ENCODE measurements at regions of chr5 and their contacts with region 1.

Region 1: DNA sequence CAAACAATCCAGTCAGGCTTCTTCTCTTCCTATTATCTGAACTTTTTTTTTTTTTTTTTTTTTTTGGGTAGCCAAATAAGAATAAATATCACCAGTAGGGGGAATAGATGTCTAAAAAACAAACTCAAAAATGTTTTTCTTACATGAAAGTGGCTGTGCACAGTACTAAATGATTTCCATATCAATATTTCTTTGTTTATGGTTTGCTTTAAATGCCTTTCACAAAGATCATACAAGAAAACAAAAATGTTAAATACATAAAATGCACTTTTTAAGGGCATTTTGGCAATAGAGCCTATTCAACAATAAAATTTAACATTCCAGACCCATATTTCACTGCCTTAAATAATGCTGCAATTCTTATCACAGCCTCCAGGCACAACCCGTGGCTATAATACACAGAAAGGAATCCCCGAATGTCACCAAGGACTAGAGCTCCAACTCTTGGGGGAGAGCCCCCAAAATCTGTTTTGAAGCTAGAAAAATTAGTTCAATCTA is 91.1 kb upstream of the TBCA start:
- DNase-seq: peak; percentile 32
- ATAC-seq: peak; percentile 82
- H3K4me3 ChIP-seq: no peak overlapping the region
- H3K27ac ChIP-seq: no peak overlapping the region
- H3K4me1 ChIP-seq: no peaks in the 10 kb centered on the region
- H3K27me3 ChIP-seq: peaks cover 19% of the 10 kb centered on the region
- CTCF ChIP-seq: peak; percentile 40
- POLR2A ChIP-seq: no peak
- RAD21 ChIP-seq: peak; percentile 27; the same call in 1 of the 2 replicates

Region 2: GRCh38 chr5:77426670-77427069 is 440.6 kb before region 1 on chr5:
- CTCF ChIA-PET with region 1: no interaction called
- POLR2A ChIA-PET with region 1: no interaction called
- dilution Hi-C with region 1: no loop called
- in situ Hi-C with region 1: no loop called
- intact Hi-C with region 1: no loop called
- DNase-seq: peak; percentile 80
- ATAC-seq: peak; percentile 56
- H3K4me3 ChIP-seq: no peak overlapping the region
- H3K27ac ChIP-seq: no peak overlapping the region; the same call in 1 of the 2 replicates
- H3K4me1 ChIP-seq: peaks cover 19% of the 10 kb centered on the region
- H3K27me3 ChIP-seq: no peaks in the 10 kb centered on the region
- CTCF ChIP-seq: no peak
- POLR2A ChIP-seq: no peak
- RAD21 ChIP-seq: no peak

Region 3: GRCh38 chr5:77607324-77607723 is 259.9 kb before region 1 on chr5:
- CTCF ChIA-PET with region 1: no interaction called
- POLR2A ChIA-PET with region 1: no interaction called
- dilution Hi-C with region 1: no loop called
- in situ Hi-C with region 1: no loop called
- intact Hi-C with region 1: no loop called
- DNase-seq: no peak
- ATAC-seq: no peak
- H3K4me3 ChIP-seq: no peak overlapping the region
- H3K27ac ChIP-seq: no peak overlapping the region
- H3K4me1 ChIP-seq: no peaks in the 10 kb centered on the region
- H3K27me3 ChIP-seq: peaks cover 4% of the 10 kb centered on the region
- CTCF ChIP-seq: no peak
- POLR2A ChIP-seq: no peak
- RAD21 ChIP-seq: no peak

Region 4: DNA sequence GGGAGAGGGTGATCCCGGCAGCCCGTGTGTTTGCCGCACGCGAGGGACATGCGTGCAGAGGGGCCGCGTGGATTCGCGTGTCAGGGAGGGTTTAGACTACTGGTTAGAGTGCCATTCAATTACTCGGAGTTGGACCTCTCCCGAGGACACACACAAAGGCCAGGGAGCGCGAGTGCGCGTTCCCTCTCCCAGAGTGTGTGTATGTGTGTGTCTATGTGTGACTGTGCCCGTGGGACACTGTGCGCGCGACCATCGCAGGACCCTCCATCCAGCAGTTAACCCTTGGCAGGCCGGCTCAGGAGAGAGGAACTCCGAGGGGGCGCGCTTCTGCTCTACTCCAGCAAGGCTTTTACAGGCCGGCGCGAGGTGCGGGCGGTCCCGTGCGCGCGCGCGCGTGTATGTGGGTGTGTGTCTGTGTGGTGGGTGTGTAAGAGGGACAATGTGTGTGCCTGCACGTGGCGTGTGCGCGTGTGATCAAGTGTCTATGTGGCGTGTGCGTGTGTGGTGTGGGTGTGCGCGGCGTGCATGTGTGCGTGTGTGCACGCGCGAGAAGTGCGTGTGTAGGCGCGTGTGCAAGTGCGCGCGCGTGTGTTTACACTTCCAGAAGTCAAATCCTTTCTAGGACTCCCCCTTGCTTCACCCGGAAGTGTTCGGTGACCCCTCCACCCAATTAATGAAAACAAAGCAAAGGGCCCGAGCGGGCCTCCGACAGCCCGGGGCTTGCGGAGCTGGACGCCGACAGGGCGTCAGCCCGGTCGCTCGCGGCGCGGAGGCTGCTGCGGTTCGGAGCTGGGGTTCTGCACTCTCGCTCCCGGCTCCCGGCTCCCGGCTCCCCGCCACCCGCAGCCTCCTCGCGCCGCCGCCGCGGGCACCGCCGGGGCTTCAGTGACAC is 15.8 kb before region 1 on chr5:
- CTCF ChIA-PET with region 1: no interaction called
- POLR2A ChIA-PET with region 1: interaction called, 11 read pairs
- dilution Hi-C with region 1: no loop called
- in situ Hi-C with region 1: no loop called
- intact Hi-C with region 1: no loop called
- DNase-seq: peak; percentile 14
- ATAC-seq: peak; percentile 54
- H3K4me3 ChIP-seq: peak overlapping the region; percentile 62
- H3K27ac ChIP-seq: no peak overlapping the region
- H3K4me1 ChIP-seq: peaks cover 2% of the 10 kb centered on the region; the same call in 1 of the 2 replicates
- H3K27me3 ChIP-seq: peaks cover 6% of the 10 kb centered on the region
- CTCF ChIP-seq: no peak
- POLR2A ChIP-seq: no peak
- RAD21 ChIP-seq: no peak